ENCODE measurements at regions of chr5 and their contacts with region 1.

Region 1: GRCh38 chr5:55187370-55187769 is 14.4 kb upstream of the CDC20B start:
- DNase-seq: peak; percentile 61
- H3K4me3 Mint-ChIP-seq: no peak overlapping the region
- H3K27ac Mint-ChIP-seq: no peak overlapping the region
- H3K4me1 Mint-ChIP-seq: peaks cover 7% of the 10 kb centered on the region
- H3K27me3 Mint-ChIP-seq: peaks cover 24% of the 10 kb centered on the region
- CTCF ChIP-seq: peak; percentile 56

Region 2: DNA sequence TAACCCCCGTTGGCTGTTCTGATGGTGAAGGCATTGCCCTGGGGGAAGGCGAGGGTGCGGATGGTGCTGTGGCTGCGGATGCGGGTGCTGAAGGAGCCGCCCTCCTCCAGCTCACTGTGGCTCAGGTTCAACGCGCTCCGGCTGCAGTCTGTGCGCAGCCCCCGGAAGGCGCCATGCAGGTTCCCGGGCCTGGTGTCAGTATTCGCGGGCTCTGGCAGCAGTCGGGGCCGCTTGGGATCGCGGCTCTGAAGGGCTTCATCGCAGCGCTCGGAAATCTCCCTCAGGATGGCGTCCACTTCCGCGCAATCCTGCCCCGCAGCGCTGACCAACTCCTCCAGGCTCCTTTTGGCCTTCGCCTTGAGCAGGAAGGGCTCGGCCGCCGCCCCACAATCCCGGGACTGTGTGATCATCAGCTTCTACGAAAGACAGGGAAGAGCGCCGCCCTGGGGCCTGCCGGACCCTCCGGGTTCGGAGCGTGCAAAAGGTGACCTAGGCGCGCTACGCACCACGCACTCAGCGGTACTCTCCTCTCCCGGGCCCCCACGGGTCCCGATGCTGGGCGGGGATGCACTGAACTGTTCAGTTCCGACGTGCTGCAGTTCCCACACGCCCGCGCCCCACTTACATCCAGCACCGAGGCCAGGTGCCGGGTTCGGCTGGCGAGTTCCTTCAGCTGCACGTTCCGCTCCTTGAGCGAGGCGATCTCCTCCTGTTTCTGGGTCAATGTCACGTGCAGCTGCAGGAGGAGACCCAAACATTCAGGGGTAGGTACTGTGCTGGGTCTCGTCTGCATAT is 33.2 kb after region 1 on chr5:
- CTCF ChIA-PET with region 1: interaction called, 10 read pairs
- POLR2A ChIA-PET with region 1: no interaction called
- intact Hi-C with region 1: no loop called
- DNase-seq: no peak
- H3K4me3 Mint-ChIP-seq: no peak overlapping the region
- H3K27ac Mint-ChIP-seq: no peak overlapping the region
- H3K4me1 Mint-ChIP-seq: no peaks in the 10 kb centered on the region
- H3K27me3 Mint-ChIP-seq: no peaks in the 10 kb centered on the region
- CTCF ChIP-seq: no peak

Region 3: GRCh38 chr5:55226027-55226933 is 38.9 kb after region 1 on chr5:
- CTCF ChIA-PET with region 1: interaction called, 10 read pairs
- POLR2A ChIA-PET with region 1: interaction called, 3 read pairs
- intact Hi-C with region 1: no loop called
- DNase-seq: peak; percentile 84
- H3K4me3 Mint-ChIP-seq: peak overlapping the region; percentile 74
- H3K27ac Mint-ChIP-seq: no peak overlapping the region
- H3K4me1 Mint-ChIP-seq: no peaks in the 10 kb centered on the region
- H3K27me3 Mint-ChIP-seq: no peaks in the 10 kb centered on the region
- CTCF ChIP-seq: peak; percentile 88